ENCODE measurements at regions of chr3 and their contacts with region 1.

Region 1: DNA sequence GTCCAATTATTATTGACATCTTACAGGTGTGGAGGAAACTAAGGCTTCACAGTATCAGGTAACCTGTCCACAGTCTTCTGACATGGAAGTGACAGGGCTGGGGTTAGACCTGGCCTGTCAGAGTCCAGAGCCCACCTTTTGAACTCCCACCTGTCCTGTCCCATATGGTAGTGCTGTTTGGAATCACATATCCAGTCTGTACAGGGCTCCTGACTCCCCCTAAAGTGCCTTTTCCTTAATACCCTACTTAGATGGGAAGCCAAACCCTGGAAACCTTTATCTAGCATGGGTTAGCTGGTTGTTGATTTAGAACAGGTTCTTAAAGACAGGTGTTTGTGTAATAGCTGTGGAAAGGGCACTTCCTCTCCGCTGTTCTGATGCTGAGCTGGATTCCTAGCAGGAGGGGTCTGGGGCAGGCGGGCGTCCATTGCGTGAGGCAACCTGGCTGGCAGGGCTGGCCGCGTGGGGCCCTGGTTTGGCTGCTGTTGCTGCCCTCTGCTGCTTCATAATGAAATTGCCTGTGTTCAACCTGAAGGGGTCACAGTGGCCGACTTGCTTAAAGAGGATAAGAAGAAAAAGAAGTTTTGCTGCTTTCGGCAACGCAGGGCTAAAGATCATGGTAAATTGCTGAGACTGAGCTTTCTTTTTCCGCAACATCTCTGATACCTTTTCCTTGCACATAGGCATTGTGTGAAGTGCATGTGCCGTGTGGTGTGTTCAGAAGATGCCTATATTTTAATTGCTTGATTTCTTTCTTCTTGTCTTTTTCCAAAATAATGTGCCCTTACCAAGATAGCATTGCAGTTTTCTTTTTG is 136.2 kb downstream of the CHDH start:
- DNase-seq: peak; percentile 70
- ATAC-seq: peak; percentile 80
- H3K4me3 Mint-ChIP-seq: no peak overlapping the region
- H3K27ac Mint-ChIP-seq: no peak overlapping the region
- H3K4me1 Mint-ChIP-seq: peaks cover 12% of the 10 kb centered on the region
- H3K27me3 Mint-ChIP-seq: peaks cover 2% of the 10 kb centered on the region

Region 2: DNA sequence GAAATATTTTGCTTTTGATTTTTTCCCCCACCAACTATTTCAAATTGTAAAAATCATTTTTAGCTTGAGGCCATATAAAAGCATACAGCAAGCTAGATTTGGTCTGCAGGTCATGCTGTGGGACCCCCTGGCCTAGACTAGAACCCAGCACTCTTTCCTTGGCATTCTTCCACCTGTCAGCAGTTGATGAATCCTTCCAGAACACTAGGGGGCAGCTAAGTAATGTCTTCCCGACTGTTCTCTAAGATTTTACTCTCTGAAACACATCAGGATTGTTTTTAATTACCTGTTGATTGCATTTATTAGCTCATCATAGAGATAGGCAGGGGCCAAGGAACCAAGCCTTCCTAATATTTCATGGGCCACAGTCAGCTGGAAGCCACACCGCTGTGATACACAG is 41.2 kb before region 1 on chr3:
- CTCF ChIA-PET with region 1: interaction called, 13 read pairs
- POLR2A ChIA-PET with region 1: no interaction called
- DNase-seq: no peak
- ATAC-seq: no peak
- H3K4me3 Mint-ChIP-seq: no peak overlapping the region
- H3K27ac Mint-ChIP-seq: no peak overlapping the region
- H3K4me1 Mint-ChIP-seq: no peaks in the 10 kb centered on the region
- H3K27me3 Mint-ChIP-seq: peaks cover 9% of the 10 kb centered on the region

Region 3: DNA sequence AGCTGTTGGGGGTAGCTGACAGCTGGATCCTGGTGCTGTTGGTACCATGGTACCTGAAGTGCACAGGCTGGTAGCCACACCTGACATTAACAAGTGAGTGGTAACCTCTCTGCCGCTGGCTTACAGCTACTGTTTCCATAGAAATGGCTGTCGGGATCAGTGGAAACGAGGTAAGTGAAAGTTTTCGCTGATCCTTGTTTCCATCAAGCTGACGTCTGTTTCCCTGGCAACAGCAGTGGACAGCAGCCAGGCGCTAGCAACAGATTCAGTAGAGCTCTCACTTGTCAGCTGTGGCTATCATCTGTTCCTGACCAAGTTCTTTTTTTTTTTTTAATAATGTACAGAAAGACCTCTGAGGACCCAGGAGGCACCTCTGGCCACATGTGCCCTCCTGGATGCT is 30.0 kb before region 1 on chr3:
- CTCF ChIA-PET with region 1: interaction called, 13 read pairs
- POLR2A ChIA-PET with region 1: no interaction called
- DNase-seq: no peak
- ATAC-seq: no peak
- H3K4me3 Mint-ChIP-seq: no peak overlapping the region
- H3K27ac Mint-ChIP-seq: no peak overlapping the region
- H3K4me1 Mint-ChIP-seq: no peaks in the 10 kb centered on the region
- H3K27me3 Mint-ChIP-seq: peaks cover 45% of the 10 kb centered on the region